HEK293T (cell line): ENCODE measurements at regions of chr7 and their contacts with region 1.

Region 1: GRCh38 chr7:140810830-140811556 is 113.7 kb downstream of the BRAF start:
- DNase-seq: peak; percentile 69

Region 2: DNA sequence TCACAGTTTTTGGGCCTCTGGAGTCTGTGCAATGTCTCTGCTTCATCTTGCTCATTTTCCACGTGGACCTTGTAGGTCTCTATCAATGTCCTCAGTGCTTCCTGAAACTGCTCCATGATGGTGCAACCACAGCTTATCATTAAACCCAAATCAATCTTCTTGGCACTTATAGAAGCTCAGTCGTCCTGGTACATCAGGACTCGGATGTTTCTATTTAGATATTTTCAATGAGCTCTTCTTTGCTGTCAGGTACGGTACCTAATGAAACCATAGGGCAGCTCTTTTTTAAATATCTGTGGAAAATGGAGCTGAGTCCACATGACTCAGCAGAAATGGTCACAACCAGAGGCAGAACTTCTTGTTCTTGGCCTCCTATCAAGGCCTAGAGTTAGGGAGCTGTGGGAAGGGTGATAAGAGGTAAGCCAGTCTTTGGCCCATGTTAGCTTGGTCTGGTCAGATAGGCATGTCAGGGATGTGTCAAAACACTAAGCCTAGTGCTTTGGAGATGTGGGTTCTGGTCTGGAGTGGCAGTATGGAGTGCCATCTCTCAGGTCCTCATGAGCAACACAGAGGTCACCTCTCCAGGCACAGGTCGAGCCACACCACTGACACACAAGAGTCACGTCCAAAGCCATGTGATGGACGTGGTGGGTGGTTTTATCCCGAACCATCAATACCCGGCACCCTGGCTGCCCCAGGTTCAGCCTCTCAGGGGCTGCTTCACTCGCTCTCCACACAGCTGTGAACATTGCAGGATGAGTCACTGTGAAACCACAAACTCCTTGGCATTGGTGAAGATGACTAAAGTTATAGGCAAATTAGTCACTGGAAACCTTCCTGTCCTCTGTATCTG is 894.9 kb before region 1 on chr7:
- CTCF ChIA-PET with region 1: no interaction called
- POLR2A ChIA-PET with region 1: no interaction called
- DNase-seq: no peak

Region 3: GRCh38 chr7:140673063-140673773 is 137.8 kb before region 1 on chr7:
- CTCF ChIA-PET with region 1: interaction called, 11 read pairs
- POLR2A ChIA-PET with region 1: interaction called, 3 read pairs
- DNase-seq: peak; percentile 72

Region 4: GRCh38 chr7:140983802-140984201 is 172.8 kb after region 1 on chr7:
- CTCF ChIA-PET with region 1: interaction called, 12 read pairs
- POLR2A ChIA-PET with region 1: no interaction called
- DNase-seq: no peak

Region 5: DNA sequence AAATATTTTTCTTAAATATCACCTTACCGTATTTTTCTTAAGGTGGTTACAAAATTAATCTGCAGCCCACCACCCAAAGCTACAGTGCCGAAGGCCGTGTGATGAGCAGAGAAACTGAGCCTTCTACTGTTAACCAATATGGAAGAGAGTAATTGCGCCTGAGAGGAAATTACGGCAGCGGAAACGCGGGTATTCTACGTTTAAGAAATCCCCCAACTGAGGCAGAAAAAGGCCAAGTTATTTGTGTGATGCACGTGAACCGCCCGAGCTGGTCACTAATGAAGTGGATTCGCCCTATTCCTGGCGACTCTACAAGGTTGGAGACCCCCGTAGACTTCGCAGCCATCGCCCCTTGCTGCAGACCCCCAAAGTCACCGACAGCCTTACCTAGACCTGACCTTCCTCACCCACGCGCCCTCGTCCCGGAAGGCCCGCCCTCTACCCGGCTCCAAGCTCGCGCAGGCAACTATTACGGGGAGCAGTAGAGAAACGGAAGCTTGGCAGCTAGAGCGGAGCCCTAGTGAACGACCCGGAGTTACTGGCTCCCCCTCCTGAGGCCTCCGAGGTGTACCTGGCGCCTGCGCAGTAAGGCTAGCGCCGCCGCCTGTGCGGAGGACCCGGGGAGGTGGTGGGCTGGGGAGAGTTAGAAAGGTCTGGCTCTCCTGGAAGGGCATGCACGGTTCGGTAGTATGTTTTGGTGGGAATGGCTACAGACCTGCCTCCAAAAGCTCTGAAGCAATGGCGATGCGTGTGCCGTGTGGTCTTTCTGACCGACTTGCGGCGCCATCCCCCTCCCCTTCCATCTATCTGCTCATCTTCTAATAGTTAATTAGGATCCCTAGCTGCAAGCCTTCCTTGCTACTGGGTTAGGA is 203.8 kb after region 1 on chr7 and contains the start of gene MRPS33:
- CTCF ChIA-PET with region 1: interaction called, 23 read pairs
- POLR2A ChIA-PET with region 1: interaction called, 21 read pairs
- DNase-seq: peak; percentile 100

Region 6: GRCh38 chr7:141220263-141220880 is 409.4 kb after region 1 on chr7:
- CTCF ChIA-PET with region 1: interaction called, 13 read pairs
- POLR2A ChIA-PET with region 1: no interaction called
- DNase-seq: peak; percentile 77

Region 7: DNA sequence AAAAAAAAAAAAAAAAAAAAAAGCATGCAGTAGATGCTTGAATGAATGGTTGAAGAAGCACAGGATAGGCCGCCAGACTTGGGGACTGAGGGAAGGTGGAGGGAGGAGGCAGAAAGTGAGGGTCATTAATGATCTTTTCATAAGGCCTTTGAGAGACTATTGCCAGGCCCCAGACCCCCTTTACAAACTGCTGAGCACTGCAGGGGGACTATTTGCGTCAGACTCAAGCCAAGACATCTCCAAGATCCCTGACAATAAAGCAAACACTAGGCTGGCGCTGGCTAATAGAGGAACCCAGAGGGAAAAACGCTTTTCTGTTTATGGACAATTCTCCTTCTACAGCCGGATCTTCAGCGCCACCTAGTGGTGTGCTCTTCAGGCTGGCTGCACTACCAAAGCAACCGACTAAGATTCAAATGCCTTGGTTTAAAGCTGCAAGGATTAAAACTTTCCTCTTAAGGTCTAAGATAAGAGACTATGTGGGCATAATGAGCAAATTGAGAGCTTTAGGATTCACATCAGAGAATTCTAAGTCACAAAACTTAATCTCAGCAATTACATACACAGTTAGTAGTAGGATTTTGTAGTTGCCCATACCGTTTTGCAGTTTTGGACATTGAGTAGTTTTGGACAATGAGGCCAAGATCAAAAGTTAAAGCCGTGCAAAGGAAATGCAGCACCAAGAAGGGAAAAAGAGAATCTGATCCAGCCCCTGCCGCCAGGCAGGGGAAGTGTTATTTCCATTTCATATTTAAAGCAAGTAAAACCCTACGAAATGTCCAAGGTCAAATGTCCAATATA is 722.4 kb after region 1 on chr7:
- CTCF ChIA-PET with region 1: interaction called, 12 read pairs
- POLR2A ChIA-PET with region 1: no interaction called
- DNase-seq: peak; percentile 87